Spleen (tissue), 13 donors: ENCODE measurements at regions of chr12 and their contacts with region 1.

Region 1: GRCh38 chr12:27014085-27014858 is at the start of gene TM7SF3:
- DNase-seq: peak; percentile 100
- H3K4me3 ChIP-seq: peak within 1 kb of the TSS; percentile 84 to 99 (median 92)
- H3K27ac ChIP-seq: peak within 1 kb of the TSS; percentile 89 to 98 (median 96)
- H3K4me1 ChIP-seq: peaks cover 10 to 69% (median 57%) of the 10 kb centered on the region in 6 donors
- H3K27me3 ChIP-seq: no peaks in the 10 kb centered on the region
- CTCF ChIP-seq: peak; percentile 84 to 99 (median 99)
- POLR2A ChIP-seq: peak in 2 of 3 donors; percentile 22 to 47
- total RNA-seq, gene TM7SF3: 33.7 to 88.7 (median 52.3) TPM

Region 2: DNA sequence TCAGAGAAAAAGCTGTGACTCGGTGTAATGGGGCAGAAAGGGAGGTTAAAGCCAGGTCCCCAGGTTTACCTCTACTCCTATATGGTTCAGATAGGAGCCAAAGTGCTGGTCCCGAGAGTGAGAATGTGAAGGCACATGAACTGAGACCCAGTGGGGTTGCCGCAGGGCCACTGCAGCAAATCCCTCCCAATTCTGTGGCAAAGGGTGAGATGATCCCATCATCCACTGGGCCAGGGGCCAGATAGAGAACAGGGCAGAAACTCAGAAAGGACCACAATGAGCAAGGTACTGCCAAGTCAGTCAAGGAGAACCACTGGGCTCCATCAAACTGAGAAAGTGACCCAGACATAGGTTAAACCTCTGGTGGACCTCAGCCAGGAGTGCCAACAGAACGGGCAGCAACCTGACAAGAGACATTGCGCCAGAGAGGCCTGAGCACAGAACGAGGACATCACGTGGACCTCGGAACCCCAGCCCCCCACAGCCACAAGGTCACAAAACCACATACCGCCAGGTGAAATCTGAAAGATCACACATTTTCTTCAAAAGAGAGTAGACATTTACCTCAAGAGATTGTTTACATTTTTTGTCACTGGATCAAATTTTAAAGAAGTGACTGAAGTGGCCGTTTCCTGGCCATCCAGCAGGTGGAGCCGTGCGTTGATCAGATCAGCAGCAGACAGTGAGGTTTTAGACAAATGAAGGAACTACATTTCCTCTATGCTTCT is 160.8 kb before region 1 on chr12:
- intact Hi-C with region 1: loop called (anchors 10 kb)
- DNase-seq: peak; percentile 89
- H3K4me3 ChIP-seq: no peak overlapping the region
- H3K27ac ChIP-seq: peak overlapping the region in 1 of 8 donors; percentile 43
- H3K4me1 ChIP-seq: peaks cover 0 to 19% (median 9%) of the 10 kb centered on the region in 6 donors
- H3K27me3 ChIP-seq: no peaks in the 10 kb centered on the region
- CTCF ChIP-seq: peak; percentile 57 to 89 (median 85)
- POLR2A ChIP-seq: no peak

Region 3: DNA sequence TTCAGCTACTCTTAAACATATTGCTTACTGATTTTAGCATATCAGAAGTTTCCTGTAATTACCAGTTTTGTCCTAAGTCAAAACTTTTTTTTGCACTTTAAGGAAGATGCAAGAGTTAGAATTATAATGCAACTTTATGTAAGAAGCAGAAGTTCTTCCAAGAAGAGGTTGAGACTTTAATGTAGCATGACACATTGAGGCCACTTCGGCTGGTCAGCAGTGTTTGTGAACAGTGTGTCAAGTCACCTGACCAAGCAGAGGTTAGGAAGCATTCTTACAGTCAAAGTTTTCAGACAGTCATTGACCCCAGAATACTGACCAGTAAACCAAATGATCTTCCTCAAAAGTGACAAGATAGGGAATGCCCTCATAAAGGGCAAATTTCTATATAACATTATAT is 60.8 kb before region 1 on chr12:
- intact Hi-C with region 1: loop called (anchors 10 kb)
- DNase-seq: no peak
- H3K4me3 ChIP-seq: no peak overlapping the region
- H3K27ac ChIP-seq: peak overlapping the region in 6 of 8 donors; percentile 37 to 72 (median 64)
- H3K4me1 ChIP-seq: peaks cover 0 to 54% (median 25%) of the 10 kb centered on the region in 6 donors
- H3K27me3 ChIP-seq: no peaks in the 10 kb centered on the region
- CTCF ChIP-seq: no peak
- POLR2A ChIP-seq: no peak

Region 4: DNA sequence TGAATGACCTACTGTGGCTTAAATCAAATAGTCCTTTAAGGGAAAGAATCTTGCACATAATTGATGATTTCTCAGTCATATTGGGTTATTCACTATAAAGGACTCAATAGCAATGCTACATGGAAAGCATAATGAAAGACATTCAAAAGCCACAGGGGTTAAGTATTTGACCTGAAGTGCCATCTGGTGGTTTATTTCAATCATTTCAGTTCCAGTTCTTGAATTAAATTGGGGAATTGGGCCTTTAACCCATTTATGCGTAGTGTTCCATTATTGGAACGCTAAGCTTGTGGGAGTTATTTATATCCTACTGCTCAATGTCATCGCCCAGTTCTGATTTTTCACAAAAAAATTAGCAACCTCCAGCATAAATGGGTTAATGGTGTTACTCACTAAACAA is 109.4 kb after region 1 on chr12:
- intact Hi-C with region 1: no loop called
- DNase-seq: no peak
- H3K4me3 ChIP-seq: no peak overlapping the region
- H3K27ac ChIP-seq: no peak overlapping the region
- H3K4me1 ChIP-seq: no peaks in the 10 kb centered on the region
- H3K27me3 ChIP-seq: no peaks in the 10 kb centered on the region
- CTCF ChIP-seq: peak in 3 of 11 experiments; percentile 24 to 45 (median 44)
- POLR2A ChIP-seq: no peak

Region 5: GRCh38 chr12:27176787-27177186 is 162.5 kb after region 1 on chr12:
- intact Hi-C with region 1: no loop called
- DNase-seq: no peak
- H3K4me3 ChIP-seq: no peak overlapping the region
- H3K27ac ChIP-seq: no peak overlapping the region
- H3K4me1 ChIP-seq: peaks cover 0 to 9% (median 0%) of the 10 kb centered on the region in 6 donors
- H3K27me3 ChIP-seq: no peaks in the 10 kb centered on the region
- CTCF ChIP-seq: no peak
- POLR2A ChIP-seq: no peak

Region 6: DNA sequence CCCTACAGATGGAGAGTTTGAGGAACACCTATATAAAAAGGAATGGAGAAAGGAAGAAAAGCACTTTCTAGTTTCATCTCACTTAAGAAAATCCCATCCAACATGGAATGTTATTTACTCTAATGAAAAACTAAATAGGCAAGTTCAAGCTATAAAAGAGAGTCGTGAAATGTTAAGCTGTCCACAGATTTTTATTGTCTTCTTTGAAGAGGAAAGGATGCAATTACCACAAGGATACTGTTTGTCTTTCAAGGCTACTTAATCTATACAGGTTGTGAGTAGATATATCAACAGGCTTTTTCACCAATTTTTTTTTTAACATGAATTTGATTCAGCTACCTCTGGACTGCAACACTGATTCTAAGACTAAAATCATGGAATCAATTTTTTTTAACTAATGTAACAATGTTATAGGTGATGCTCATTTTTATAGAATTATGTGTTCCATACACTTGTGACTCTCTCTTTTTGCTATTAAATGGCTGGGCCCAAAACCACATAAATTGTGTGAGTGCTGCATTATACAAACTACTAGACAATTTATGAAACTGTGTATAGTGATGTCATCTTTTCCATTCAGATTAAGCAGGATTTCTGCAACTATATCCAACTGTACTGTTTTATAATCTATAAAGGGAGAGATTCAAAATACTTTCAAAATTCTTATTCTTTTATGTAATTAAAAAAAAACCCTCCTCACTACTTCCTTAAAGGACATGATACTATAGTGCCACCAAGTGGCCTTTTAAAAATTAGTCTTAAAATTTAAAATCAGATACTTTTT is 291.6 kb after region 1 on chr12:
- intact Hi-C with region 1: loop called (anchors 5 kb)
- DNase-seq: no peak
- H3K4me3 ChIP-seq: no peak overlapping the region
- H3K27ac ChIP-seq: no peak overlapping the region
- H3K4me1 ChIP-seq: peaks cover 0 to 11% (median 3%) of the 10 kb centered on the region in 6 donors
- H3K27me3 ChIP-seq: no peaks in the 10 kb centered on the region
- CTCF ChIP-seq: peak in 6 of 11 experiments; percentile 29 to 57 (median 38)
- POLR2A ChIP-seq: no peak